ENCODE measurements at regions of chr14 and their contacts with region 1.

Region 1: DNA sequence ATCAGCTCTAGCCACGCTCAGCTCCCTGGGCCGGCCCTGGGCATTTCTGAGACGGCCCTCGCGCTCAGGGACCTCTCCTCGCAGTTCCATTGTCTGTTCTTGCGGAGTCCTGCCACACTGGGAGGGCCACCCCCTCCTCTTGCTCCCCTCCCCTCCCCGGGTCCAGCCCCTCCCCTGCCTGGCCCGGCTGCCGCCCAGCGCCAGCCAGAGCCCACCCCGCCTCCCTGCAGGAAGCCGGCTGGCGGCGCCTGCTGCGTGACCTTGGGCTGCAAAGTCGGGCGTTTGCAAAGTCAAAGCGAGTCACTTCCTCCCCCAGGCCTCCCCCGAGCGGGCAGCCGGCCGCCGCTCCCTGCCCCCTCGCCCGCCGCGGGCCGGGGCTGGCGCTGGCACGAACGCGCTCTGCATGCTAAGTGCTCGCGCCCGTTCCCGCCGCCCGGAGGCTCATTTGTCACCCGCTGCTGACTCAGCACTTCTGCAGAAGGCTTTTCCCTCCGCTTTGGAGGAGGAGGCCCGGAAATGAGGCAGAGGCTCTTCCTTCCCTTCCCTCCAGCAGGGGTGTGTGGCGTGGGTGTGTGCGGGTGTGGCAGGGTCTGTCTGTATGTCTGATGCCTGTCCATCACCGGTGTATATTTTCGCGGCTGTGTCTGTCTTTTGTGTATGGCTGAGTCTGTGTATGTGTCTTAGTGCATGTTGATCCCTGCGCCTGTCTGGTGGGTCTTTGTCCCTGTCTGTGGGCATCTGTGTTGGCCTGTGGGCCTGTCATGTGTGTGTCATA is 72.0 kb downstream of the IRF2BPL start:
- DNase-seq: peak; percentile 98
- H3K4me3 Mint-ChIP-seq: peak overlapping the region; percentile 80
- H3K27ac Mint-ChIP-seq: peak overlapping the region; percentile 97
- H3K4me1 Mint-ChIP-seq: peaks cover 72% of the 10 kb centered on the region
- H3K27me3 Mint-ChIP-seq: no peaks in the 10 kb centered on the region

Region 2: DNA sequence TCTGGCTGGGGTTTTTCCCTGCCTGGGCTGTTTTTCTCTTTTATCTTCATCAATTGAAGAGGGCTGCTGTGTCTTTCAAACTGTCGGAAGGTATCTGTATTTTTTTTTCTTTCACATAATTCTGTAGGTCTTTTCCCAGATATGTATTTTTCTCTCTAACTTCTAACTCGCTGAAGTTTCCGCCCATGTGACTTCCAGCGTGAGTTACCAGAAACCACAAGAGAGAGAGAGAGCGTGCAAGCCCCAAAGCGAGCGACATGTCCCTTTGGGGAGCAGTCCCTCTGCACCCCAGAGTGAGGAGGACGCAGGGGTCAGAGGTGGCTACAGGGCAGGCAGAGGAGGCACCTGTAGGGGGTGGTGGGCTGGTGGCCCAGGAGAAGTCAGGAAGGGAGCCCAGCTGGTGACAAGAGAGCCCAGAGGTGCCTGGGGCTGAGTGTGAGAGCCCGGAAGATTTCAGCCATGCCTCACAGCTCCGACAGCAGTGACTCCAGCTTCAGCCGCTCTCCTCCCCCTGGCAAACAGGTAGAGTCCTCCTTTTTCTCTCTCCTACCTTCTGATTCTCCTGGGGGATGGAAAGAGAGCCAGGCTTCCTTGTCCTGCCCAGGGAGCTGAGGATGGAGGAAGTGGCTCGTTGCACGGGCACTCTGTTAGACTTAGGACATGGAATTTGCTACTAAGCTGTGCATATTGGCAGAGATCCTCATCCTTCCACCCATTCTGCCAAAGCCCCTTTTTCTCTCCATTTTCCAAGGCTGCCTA is 1434.1 kb before region 1 on chr14 and contains the start of gene BATF:
- CTCF ChIA-PET with region 1: no interaction called
- intact Hi-C with region 1: loop called (anchors 10 kb)
- DNase-seq: peak; percentile 91
- H3K4me3 Mint-ChIP-seq: peak within 1 kb of the TSS; percentile 99
- H3K27ac Mint-ChIP-seq: peak within 1 kb of the TSS; percentile 100
- H3K4me1 Mint-ChIP-seq: peaks cover 61% of the 10 kb centered on the region
- H3K27me3 Mint-ChIP-seq: no peaks in the 10 kb centered on the region
- total RNA-seq, gene BATF: 178 to 179 TPM

Region 3: DNA sequence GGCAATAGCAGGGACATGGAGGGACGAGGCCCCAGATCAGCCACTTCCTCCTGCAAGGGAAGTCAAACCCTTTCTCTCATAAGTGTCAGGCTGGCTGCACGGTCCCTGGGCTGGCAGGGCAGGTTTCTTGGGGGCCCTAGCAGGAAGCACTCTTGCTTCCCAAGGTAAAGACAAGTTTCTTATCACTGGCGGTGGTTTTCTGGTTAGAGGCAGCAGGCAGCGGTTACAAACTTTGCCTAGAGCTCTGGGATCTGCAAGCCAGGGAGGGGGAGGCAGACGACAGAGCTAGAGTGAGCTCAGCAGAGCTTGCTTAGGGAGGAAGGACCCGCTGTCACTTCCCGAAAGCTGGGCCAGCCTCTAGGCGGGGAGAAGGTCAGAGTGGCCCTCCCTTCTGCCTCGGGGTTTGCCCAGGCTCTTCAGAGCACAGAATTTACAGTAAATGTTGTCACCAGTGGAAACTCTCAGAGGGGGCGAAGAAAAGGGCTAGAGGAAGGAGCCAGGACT is 1413.9 kb before region 1 on chr14:
- CTCF ChIA-PET with region 1: no interaction called
- intact Hi-C with region 1: loop called (anchors 1 kb)
- DNase-seq: peak; percentile 97
- H3K4me3 Mint-ChIP-seq: peak overlapping the region; percentile 65
- H3K27ac Mint-ChIP-seq: peak overlapping the region; percentile 99
- H3K4me1 Mint-ChIP-seq: peaks cover 84% of the 10 kb centered on the region
- H3K27me3 Mint-ChIP-seq: no peaks in the 10 kb centered on the region

Region 4: GRCh38 chr14:76929927-76930326 is 26.6 kb before region 1 on chr14:
- CTCF ChIA-PET with region 1: interaction called, 7 read pairs
- intact Hi-C with region 1: loop called (anchors 1 kb)
- DNase-seq: peak; percentile 85
- H3K4me3 Mint-ChIP-seq: peak overlapping the region; percentile 58
- H3K27ac Mint-ChIP-seq: peak overlapping the region; percentile 72
- H3K4me1 Mint-ChIP-seq: peaks cover 70% of the 10 kb centered on the region
- H3K27me3 Mint-ChIP-seq: no peaks in the 10 kb centered on the region

Region 5: DNA sequence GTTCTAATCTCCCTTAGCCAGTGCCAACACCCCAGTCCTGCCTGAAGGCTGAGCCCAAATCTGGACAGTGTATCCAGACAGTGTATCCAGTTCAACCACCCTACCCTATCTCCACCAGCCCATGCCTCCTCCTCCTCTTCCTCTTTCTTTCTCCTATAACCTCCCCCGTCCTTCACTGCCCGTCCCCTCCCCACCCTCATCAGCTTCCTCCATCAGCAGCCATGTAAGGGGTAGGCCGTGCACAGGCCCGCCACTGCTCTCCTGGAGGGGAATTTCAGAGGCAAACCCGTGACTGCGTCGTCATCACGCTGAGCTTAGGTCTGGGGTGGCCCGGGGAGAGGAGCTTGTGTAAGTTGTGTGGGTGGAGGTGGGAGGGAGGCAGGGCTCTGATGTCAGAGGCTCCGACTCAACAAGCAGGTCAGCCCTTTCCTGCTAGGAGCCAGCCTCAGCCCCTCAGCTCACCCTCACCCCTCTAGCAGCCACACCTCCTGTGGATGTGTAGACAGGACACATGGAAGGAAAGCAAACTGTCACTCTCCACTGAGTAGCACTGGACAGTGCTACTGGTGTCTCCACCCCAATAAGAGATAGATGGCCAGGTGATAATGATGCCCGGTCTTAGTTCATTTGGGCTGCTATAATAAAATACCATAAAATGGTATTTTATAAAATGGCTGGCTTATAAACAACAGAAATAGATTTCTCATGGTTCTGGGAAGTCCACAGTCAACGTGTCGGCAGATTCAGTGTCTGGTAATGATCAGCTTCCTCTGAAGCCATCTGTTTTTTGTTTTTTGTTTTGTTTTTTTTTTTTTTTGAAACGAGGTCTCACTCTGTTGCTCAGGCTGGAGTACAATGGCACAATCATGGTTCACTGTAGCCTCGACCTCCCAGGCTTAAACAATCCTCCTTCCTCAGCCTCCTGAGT is 21.6 kb after region 1 on chr14:
- CTCF ChIA-PET with region 1: interaction called, 13 read pairs
- intact Hi-C with region 1: loop called (anchors 1 kb)
- DNase-seq: peak; percentile 97
- H3K4me3 Mint-ChIP-seq: peak overlapping the region; percentile 71
- H3K27ac Mint-ChIP-seq: peak overlapping the region; percentile 95
- H3K4me1 Mint-ChIP-seq: peaks cover 28% of the 10 kb centered on the region
- H3K27me3 Mint-ChIP-seq: no peaks in the 10 kb centered on the region

Region 6: DNA sequence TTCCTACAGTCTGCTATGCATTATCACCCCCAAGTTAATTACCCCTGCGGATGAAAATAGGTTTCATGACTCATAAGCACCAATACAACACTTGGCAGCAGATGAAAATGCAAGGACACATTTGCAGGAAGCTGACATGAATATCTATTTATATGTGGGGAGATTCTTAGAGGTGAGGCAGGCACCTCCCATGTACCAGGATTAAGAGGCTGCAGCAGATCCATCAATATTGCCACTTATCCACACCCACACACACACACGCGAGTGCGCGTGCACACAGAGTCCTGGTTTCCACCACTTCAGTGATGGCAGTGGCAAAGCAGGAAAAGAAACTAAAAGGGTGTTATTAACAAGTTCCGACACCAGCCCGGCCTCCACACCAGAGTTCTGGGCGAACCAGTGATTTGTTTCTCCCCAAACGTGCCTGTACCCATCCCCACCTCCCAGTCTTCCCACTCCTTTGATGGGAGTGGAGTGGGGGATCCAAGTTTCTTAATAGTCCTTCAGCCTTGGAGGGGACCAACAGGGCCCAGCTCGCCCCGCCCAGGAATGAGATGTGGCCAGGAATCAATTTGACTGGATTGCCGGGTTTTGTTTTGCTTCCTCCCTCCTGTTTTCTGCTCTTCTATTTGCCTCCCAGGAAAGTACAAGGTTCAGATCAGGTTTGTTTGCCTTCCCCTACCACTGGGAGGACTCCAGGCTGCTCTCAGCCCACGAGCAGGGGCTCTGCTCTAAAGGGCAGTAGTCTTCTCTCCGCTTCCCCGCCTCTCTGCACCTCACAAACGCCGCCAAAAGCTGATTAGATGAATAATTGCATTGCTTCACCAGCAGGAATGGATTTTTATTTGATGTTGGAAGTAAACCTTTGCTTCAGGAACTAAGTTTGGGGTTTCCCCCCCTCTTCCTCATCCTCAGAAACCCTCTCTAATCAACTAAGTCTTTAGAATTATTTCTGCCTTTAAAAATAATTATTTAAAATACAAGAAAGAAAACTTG is 66.8 kb after region 1 on chr14:
- CTCF ChIA-PET with region 1: interaction called, 16 read pairs
- intact Hi-C with region 1: loop called (anchors 1 kb)
- DNase-seq: peak; percentile 73
- H3K4me3 Mint-ChIP-seq: peak overlapping the region; percentile 26
- H3K27ac Mint-ChIP-seq: peak overlapping the region; percentile 86
- H3K4me1 Mint-ChIP-seq: peaks cover 49% of the 10 kb centered on the region
- H3K27me3 Mint-ChIP-seq: no peaks in the 10 kb centered on the region

Region 7: DNA sequence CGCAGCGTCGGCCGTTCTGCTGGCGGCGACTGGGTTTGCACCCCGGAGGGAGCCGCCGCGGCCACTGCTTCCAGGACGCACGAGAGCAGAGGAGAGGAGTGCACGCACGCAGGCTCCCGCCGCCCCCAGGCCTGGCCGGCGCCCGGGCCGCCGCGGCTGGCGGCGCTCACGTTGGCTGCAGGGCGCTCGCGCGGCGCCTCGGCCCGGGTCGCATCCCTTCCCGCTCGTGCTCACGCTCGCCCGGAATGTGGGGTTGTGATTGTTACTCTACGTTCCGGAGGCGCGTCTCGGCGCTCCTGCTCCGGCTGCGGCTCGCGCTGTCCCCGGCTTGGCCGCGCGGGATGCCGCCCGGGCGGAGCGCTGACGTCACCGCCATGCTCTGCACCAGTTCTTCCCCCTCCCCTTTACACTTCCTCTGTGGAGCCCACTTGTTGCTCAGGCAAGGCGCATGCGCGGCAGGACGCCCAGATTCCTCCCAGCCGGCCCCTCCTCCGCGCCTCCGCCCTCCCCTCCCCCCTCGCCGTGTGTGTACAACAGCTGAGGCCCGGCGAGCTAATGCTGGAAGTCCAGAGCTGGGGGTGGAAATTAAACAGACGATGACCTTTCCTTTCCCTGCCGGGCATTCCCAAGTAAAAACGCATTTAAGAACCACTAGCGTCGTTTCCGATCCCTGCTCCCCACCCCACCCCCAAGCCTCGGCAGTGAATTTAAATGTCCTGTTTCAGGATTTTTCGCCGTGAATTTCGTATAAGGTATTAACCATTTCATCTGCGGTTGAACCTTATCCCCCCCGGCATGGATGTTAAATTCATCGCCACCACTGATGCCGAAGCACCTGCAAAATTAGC is 72.1 kb after region 1 on chr14 and contains the start of gene IRF2BPL:
- CTCF ChIA-PET with region 1: interaction called, 16 read pairs
- intact Hi-C with region 1: loop called (anchors 1 kb)
- DNase-seq: peak; percentile 96
- H3K4me3 Mint-ChIP-seq: peak within 1 kb of the TSS; percentile 82
- H3K27ac Mint-ChIP-seq: peak within 1 kb of the TSS; percentile 94
- H3K4me1 Mint-ChIP-seq: peaks cover 57% of the 10 kb centered on the region
- H3K27me3 Mint-ChIP-seq: no peaks in the 10 kb centered on the region
- total RNA-seq, gene IRF2BPL: 34.8 to 35.2 TPM